CD8-positive, alpha-beta T cell (primary cell): ENCODE measurements at regions of chr9 and their contacts with region 1.

Region 1: DNA sequence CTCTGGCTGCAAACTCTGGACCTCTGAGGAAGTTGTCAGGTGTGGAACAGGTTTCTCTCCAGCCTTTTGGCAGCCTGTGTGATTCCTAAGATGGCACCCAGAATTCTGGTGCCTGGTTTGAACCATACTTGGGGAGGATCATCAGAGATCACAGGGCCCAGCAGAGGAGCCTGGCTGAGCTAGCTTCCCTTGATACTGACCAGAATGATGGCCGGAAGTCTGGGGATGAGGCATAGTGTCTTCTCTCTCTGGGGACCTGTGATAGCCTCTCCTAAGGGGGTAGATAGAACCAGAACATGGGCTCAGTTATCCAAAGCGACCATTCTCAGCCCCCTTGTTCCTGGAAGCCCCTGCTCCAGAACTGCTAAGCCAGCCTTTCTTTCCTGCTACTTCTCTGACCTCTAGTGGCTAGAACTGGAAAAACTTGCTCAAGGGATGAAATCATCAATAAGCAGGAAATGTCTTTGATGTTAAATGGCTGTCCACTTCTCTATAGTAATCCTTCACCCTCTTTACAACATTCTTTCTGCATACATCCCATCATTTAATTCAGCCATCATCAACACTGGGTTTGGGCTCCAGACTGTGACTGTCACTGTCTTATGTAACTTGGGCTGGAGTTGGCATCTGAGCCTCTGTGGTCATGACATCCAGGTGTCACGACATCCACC is 55.1 kb downstream of the C9orf152 start:
- DNase-seq: peak in 2 of 9 experiments; percentile 55 to 67
- ATAC-seq: no peak
- H3K4me3 ChIP-seq: no peak overlapping the region
- H3K4me3 Mint-ChIP-seq: no peak overlapping the region
- H3K27ac ChIP-seq: no peak overlapping the region
- H3K27ac Mint-ChIP-seq: no peak overlapping the region
- H3K4me1 ChIP-seq: peaks cover 26% of the 10 kb centered on the region
- H3K4me1 Mint-ChIP-seq: peaks cover 46% of the 10 kb centered on the region
- H3K27me3 ChIP-seq: no peaks in the 10 kb centered on the region
- H3K27me3 Mint-ChIP-seq: no peaks in the 10 kb centered on the region
- CTCF ChIP-seq: peak; percentile 49

Region 2: GRCh38 chr9:109244157-109245132 is 908.4 kb before region 1 on chr9:
- CTCF ChIA-PET with region 1: no interaction called
- POLR2A ChIA-PET with region 1: no interaction called
- intact Hi-C with region 1: loop called (anchors 5 kb)
- DNase-seq: peak; percentile 32 to 74 (median 60)
- ATAC-seq: peak; percentile 56
- H3K4me3 ChIP-seq: no peak overlapping the region
- H3K4me3 Mint-ChIP-seq: no peak overlapping the region
- H3K27ac ChIP-seq: no peak overlapping the region
- H3K27ac Mint-ChIP-seq: no peak overlapping the region
- H3K4me1 ChIP-seq: no peaks in the 10 kb centered on the region
- H3K4me1 Mint-ChIP-seq: peaks cover 5% of the 10 kb centered on the region
- H3K27me3 ChIP-seq: peaks cover 0 to 4% of the 10 kb centered on the region in 2 experiments
- H3K27me3 Mint-ChIP-seq: peaks cover 15% of the 10 kb centered on the region
- CTCF ChIP-seq: peak; percentile 86

Region 3: DNA sequence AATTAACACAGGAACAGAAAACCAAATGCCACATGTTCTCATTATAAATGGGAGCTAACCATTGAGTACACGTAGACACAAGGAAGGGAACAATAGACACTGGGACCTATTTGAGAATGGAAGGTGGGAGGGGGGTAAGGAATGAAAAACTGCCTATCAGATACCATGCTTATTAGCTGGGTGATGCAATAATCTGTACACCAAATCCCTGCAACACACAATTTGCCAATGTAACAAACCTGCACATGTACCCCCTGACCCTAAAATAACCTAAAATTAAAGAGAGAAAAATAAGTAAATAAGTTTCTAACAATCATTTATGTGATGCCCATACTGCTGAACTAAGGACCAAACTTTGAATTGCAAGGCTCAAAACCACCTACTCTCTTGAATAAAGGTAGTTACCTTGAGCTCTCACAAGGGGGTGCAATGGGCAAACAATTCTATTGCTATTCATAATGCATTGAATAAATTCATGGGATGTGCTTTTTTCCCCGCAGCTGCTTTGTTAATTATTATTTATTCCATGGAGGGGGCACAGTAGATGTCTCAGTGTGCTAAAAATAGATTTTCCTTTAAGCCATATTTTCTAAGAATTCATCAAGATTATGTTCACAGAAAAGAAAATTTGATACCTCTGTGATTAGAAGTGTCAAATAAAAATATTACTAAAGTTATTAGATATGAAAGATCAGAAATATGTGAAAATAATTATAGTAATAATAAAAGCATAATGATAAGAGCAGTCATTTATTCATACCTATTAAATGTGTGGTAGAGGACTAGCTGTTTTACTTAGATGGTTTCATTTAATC is 578.6 kb before region 1 on chr9:
- CTCF ChIA-PET with region 1: no interaction called
- POLR2A ChIA-PET with region 1: no interaction called
- intact Hi-C with region 1: loop called in 1 of 2 experiments (anchors 10 kb)
- DNase-seq: peak in 2 of 9 experiments; percentile 2 to 22
- ATAC-seq: no peak
- H3K4me3 ChIP-seq: no peak overlapping the region
- H3K4me3 Mint-ChIP-seq: no peak overlapping the region
- H3K27ac ChIP-seq: no peak overlapping the region
- H3K27ac Mint-ChIP-seq: no peak overlapping the region
- H3K4me1 ChIP-seq: no peaks in the 10 kb centered on the region
- H3K4me1 Mint-ChIP-seq: no peaks in the 10 kb centered on the region
- H3K27me3 ChIP-seq: no peaks in the 10 kb centered on the region
- H3K27me3 Mint-ChIP-seq: peaks cover 2% of the 10 kb centered on the region
- CTCF ChIP-seq: peak; percentile 3

Region 4: GRCh38 chr9:109834855-109835254 is 318.0 kb before region 1 on chr9:
- CTCF ChIA-PET with region 1: no interaction called
- POLR2A ChIA-PET with region 1: no interaction called
- intact Hi-C with region 1: no loop called
- DNase-seq: no peak
- ATAC-seq: no peak
- H3K4me3 ChIP-seq: no peak overlapping the region
- H3K4me3 Mint-ChIP-seq: no peak overlapping the region
- H3K27ac ChIP-seq: no peak overlapping the region
- H3K27ac Mint-ChIP-seq: no peak overlapping the region
- H3K4me1 ChIP-seq: no peaks in the 10 kb centered on the region
- H3K4me1 Mint-ChIP-seq: no peaks in the 10 kb centered on the region
- H3K27me3 ChIP-seq: no peaks in the 10 kb centered on the region
- H3K27me3 Mint-ChIP-seq: peaks cover 9% of the 10 kb centered on the region
- CTCF ChIP-seq: no peak

Region 5: GRCh38 chr9:109903515-109904138 is 249.2 kb before region 1 on chr9:
- CTCF ChIA-PET with region 1: interaction called, 10 read pairs
- POLR2A ChIA-PET with region 1: no interaction called
- intact Hi-C with region 1: loop called (anchors 1 kb)
- DNase-seq: peak in 8 of 9 experiments; percentile 11 to 72 (median 47)
- ATAC-seq: no peak
- H3K4me3 ChIP-seq: no peak overlapping the region
- H3K4me3 Mint-ChIP-seq: no peak overlapping the region
- H3K27ac ChIP-seq: no peak overlapping the region
- H3K27ac Mint-ChIP-seq: no peak overlapping the region
- H3K4me1 ChIP-seq: no peaks in the 10 kb centered on the region
- H3K4me1 Mint-ChIP-seq: no peaks in the 10 kb centered on the region
- H3K27me3 ChIP-seq: no peaks in the 10 kb centered on the region
- H3K27me3 Mint-ChIP-seq: no peaks in the 10 kb centered on the region
- CTCF ChIP-seq: peak; percentile 74

Region 6: GRCh38 chr9:110058304-110058953 is 94.4 kb before region 1 on chr9:
- CTCF ChIA-PET with region 1: interaction called, 3 read pairs
- POLR2A ChIA-PET with region 1: no interaction called
- intact Hi-C with region 1: loop called in 1 of 2 experiments (anchors 1 kb)
- DNase-seq: peak in 6 of 9 experiments; percentile 14 to 59 (median 42)
- ATAC-seq: no peak
- H3K4me3 ChIP-seq: no peak overlapping the region
- H3K4me3 Mint-ChIP-seq: no peak overlapping the region
- H3K27ac ChIP-seq: no peak overlapping the region
- H3K27ac Mint-ChIP-seq: no peak overlapping the region
- H3K4me1 ChIP-seq: no peaks in the 10 kb centered on the region
- H3K4me1 Mint-ChIP-seq: no peaks in the 10 kb centered on the region
- H3K27me3 ChIP-seq: no peaks in the 10 kb centered on the region
- H3K27me3 Mint-ChIP-seq: peaks cover 4% of the 10 kb centered on the region
- CTCF ChIP-seq: peak; percentile 37

Region 7: DNA sequence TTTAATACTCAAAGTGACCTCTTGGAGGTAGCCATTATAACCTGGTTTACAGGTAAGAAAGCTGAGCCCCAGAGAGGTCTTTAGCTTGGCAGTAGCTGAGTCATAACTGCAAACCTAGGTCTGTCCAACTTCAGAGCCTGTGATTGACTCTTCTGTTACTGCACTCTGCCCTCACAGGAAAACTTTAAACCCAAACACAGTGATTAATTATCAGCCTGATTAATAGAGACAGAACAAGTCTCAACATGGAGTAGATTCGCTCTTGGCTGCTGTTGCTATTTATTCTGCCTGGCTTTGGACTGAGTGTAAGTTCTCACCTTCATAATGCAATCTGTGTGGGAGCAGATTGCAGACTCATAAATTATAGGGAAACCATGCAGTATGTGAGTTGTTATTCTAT is 130.9 kb after region 1 on chr9:
- CTCF ChIA-PET with region 1: no interaction called
- POLR2A ChIA-PET with region 1: no interaction called
- intact Hi-C with region 1: no loop called
- DNase-seq: no peak
- ATAC-seq: no peak
- H3K4me3 ChIP-seq: no peak overlapping the region
- H3K4me3 Mint-ChIP-seq: no peak overlapping the region
- H3K27ac ChIP-seq: no peak overlapping the region
- H3K27ac Mint-ChIP-seq: no peak overlapping the region
- H3K4me1 ChIP-seq: no peaks in the 10 kb centered on the region
- H3K4me1 Mint-ChIP-seq: no peaks in the 10 kb centered on the region
- H3K27me3 ChIP-seq: no peaks in the 10 kb centered on the region
- H3K27me3 Mint-ChIP-seq: peaks cover 9% of the 10 kb centered on the region
- CTCF ChIP-seq: no peak